Posterior cingulate gyrus (tissue), 11 donors: ENCODE measurements at regions of chr16 and their contacts with region 1.

Region 1: DNA sequence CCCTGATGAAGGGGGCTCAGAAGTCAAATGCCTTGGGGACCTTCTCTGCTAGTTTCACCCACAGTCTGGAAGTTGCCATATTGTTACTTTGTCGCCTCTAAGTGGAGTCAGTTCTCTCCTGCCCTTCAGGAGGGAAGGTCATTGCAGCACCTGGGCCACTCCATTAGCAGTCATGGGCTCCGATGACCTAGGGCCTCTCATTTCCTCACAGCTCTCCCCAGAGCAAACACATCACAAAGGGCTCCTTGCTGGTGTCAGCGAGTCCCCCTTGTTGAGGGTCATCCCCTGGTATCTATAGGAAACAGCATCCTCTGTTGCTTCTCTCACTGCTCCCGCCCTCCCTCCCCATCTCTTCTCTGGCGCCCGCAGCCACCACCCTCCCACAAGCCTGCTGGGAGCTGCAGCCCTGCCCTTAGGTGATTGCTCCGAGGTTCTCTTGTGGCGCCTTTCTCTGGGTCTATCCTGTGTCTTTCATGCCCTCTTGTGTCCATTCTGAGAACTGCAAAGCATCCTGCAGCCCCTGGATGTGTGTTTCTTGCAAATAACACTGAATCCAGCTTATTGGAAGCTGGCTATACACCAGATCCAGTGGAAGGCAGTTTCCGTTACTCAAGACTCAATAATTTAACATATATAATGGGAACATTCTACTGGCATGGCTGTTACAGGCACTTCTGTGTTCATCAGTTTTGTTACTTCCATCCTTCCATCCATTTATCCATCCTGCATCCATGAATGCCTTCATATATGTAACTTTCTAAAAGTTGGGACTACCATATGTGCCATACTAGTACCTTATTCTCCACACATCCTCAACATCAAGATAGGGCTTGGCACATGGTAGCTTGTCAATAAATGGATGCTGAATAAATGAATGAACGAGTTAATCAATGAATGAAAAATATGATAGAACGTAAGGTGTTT is 21.2 kb downstream of the PDILT start:
- DNase-seq: peak in 8 of 10 donors; percentile 26 to 89 (median 58)

Region 2: GRCh38 chr16:19898924-19899604 is 484.3 kb before region 1 on chr16:
- intact Hi-C with region 1: loop called (anchors 2 kb)
- DNase-seq: peak in 3 of 10 donors; percentile 17 to 72 (median 33)

Region 3: DNA sequence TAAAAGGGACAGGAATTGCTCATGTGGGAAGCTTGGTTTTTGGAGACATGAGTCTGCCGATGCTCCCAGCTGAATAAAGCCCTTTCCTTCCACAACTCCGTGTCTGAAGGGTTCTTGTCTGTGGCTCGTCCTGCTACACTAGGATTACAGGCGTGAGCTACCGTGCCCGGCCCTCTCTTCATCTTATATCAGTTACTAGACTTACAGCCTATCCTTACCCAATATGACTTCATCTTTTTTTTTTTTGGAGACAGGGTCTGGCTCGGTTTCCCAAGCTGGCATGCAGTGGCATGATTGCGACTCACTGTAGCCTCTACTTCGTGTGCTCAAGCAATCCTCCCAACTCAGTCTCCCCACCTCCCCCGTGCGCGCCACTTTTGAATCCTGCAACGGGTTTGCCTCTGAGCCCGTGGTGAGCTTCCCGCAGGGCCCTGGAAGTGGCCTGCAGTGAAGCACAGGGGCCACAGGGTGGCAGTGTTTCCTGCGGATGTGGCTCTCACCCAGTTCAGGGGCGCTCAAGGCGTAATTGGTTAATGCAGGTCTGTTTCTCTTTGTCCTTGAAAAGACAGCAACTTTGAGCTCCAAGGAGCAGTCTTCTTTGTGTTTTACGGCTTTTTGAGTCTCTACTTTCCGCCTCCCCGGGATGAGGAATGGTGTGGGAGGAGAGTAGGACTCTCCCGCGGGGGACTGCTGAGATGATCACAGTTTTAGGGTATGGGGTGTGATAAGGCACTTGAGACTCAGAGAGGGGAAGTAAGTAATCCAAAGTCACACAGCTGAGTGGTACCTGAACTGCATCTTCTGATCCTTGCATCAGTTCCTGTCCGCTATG is 476.0 kb before region 1 on chr16:
- intact Hi-C with region 1: loop called (anchors 1 kb)
- DNase-seq: peak; percentile 51 to 95 (median 68)

Region 4: DNA sequence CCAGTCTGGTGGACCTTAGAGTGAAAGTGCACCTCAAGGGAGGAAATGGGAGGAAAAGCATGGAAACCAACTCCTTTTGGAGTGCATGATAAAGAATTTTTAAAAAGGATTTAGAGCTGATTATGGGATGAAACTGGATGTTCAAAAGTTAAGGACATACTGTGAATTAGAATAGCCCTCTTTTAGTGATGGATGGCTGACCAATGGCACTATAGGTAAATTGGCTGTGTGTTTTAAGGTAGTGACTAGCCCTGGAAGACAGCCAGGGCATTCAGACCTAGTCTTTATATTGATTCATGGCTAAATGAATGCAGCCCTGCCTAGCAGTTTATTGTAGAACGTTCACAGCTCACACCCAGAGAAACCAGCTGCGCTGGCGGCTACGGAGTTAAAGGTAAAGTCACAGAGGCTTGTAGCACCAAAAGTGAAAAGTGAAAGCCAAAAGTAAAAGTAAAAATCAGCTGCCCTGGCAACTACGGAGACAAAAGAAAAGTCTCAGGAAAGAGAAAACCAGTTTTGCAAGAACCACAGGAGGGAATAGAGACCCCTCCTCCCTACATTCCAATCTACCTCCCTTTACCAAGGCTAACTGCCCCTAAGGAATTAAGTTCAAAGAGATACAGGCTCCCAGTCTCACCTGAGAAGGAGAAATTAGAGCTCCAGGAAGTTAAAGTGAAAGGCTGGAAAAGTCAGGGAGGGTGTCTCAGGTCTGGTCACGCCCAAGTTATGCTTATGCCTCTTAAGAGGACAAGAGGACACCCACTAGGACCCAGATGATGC is 292.3 kb after region 1 on chr16:
- intact Hi-C with region 1: no loop called
- DNase-seq: no peak